ENCODE measurements at regions of chr1 and their contacts with region 1.

Region 1: DNA sequence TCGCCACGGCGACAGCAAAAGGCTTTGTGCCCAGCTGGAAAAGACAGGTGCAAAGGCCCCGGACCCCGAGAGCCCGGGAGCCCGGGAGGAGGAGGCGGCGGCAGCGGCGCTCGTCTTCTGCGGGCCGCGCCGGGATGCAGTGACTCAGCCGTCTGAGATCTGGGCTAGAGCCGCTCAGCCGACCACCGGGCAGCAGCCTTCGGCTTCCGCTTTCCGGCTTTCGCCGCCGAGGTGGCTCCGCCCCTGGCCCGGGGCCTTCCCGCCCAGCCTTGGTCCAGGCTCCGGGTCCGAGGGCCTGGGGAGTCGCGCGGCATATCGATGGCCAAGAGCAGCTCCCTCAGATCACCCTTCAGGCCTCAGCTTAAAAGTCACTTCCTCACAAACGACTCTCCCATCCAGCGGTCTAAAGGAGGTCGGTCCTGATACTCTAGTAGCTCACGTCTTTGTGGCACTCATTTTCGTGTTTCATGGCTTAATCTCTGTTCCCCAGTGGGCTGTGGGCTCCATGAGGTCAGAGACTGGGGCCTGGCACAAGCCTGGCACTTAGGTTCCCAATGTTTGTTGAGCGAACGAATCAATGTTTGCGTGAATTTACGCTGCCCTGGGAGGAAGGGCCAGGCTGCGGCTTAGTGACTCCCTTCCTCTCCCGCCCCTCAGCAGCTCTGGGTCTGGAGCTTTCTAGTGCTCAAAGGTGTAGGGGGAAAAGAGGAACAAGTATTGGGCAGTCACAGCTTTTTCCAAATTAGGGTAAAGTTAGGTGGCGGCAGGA is at the start of gene PHTF1:
- DNase-seq: no peak
- H3K4me3 ChIP-seq: peak within 1 kb of the TSS; percentile 69
- H3K27me3 ChIP-seq: no peaks in the 10 kb centered on the region
- CTCF ChIP-seq: no peak
- polyA plus RNA-seq, gene PHTF1: 7.4 and 10.9 TPM in 2 replicates

Region 2: DNA sequence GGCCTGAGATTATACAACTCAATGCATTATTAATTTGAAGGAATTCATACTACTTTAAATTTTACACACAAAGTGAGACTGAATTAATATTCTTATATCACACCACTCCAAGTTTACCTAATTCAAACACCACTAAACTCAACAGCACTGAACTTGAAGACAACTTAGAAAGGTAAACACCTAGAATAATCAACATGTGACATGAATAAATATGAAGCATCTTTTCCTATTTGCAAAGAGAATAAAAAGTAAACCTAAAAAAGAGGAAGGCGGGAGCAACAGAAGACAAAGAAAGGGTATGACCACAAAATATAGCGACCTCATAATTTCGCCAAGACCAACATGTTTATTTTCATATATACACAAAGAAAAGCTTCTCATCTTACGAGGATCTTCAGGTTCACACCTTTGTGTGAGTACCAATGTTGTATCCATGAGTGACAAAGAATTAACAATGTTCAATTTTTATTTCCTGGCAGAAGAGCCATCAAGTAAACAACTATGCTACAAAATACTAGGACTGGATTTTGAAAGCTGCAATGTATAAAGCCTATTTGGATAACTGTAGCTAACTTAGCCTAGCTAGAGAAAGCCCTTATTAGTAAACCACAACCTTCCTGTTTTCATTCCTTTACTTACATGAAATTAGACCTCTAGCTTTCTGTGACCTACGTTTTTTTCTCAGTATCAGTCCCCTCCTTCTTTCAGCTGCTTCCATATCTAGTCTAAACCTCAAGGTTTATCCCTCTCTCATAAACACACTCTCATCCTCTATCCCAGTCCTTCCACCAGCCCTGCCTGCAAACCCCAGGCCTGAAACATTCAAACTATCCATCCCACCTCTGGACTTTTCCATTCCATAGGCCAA is 21.0 kb after region 1 on chr1:
- CTCF ChIA-PET with region 1: interaction called, 4 read pairs
- POLR2A ChIA-PET with region 1: interaction called, 24 read pairs
- DNase-seq: no peak
- H3K4me3 ChIP-seq: no peak overlapping the region
- H3K27me3 ChIP-seq: no peaks in the 10 kb centered on the region
- CTCF ChIP-seq: no peak

Region 3: DNA sequence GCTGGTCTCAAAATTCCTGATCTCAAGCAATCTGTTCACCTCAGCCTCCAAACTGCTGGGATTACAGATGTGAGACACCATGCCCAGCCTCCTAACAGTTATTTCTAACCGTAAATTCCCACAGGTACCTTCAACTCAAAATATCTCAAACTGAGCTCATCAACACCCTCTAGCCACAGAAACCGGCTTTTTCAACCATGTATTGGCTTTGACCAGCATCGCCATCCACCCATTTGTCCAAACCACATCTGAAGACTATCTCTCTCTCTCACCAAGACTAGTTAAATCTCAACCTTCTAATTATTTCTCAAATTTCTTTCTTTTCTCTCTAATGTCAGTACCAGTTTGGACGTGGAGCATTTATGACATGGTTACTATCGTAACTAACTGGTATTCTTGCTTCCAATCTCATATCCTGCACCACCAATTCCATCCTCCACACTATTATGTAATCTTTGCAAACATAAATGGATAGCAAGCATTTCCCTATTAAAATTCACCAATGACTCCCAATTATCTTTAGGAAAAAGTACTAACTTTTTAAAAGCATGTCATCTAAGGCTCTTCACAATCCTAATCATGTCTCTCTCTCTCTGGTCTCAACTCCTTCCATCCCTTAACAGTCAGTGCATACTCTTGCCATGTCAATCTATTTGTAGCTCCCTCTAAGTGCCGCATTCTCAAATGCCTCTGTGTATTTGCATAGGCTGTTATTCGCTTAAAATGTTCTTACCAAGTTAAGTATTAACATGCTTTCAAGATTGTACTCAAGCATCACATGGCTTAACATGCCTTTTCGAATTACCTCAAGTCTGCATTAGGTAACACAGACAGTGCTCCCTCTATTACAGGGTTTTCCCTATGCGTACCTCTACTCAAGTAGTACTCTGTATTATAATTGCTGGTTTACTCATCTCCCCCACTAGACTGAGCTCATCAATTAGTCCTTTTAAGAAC is 34.6 kb after region 1 on chr1:
- CTCF ChIA-PET with region 1: interaction called, 3 read pairs
- POLR2A ChIA-PET with region 1: interaction called, 17 read pairs
- DNase-seq: no peak
- H3K4me3 ChIP-seq: no peak overlapping the region
- H3K27me3 ChIP-seq: no peaks in the 10 kb centered on the region
- CTCF ChIP-seq: no peak

Region 4: GRCh38 chr1:113804421-113805255 is 45.1 kb after region 1 on chr1:
- CTCF ChIA-PET with region 1: no interaction called
- POLR2A ChIA-PET with region 1: interaction called, 14 read pairs
- DNase-seq: no peak
- H3K4me3 ChIP-seq: no peak overlapping the region
- H3K27me3 ChIP-seq: no peaks in the 10 kb centered on the region
- CTCF ChIP-seq: no peak

Region 5: DNA sequence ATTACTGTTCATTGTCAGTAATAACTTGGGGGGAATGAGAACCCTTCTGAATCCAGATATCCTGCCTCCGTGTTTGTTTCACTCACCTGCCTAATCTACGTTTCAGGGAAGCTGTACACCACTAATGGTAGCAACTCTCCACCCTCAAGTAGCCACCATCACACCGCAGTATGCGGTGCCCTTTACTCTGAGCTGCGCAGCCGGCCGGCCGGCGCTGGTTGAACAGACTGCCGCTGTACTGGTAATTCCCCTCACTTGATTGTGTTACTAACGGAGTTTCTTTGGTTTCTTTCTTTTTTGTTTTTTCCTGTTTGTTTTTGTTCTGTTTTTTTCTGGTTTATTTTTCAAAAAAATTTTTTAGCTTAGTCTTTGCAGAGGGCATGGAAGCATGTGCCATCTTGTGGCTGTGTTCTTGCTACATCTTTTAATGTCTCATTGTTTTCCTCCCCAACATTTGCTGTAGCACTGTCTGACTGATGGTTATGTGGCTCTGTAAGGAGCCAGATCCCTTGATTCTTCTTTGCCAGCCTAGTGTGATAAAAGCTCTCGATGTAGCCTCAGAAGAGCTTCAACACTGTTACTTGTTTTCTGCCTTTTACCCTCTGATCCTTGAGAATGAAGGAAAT is 203.9 kb after region 1 on chr1:
- CTCF ChIA-PET with region 1: no interaction called
- POLR2A ChIA-PET with region 1: no interaction called
- DNase-seq: no peak
- H3K4me3 ChIP-seq: no peak overlapping the region
- H3K27me3 ChIP-seq: no peaks in the 10 kb centered on the region
- CTCF ChIP-seq: no peak